Activated CD4-positive, alpha-beta T cell treated with anti-CD3 and anti-CD28 coated beads, Interleukin-2, amount 10 ng/mL, durations not matched to agents 24 days and 14 days (primary cell): ENCODE measurements at regions of chr4 and their contacts with region 1.

Region 1: GRCh38 chr4:7802093-7802726 is 137.5 kb downstream of the AFAP1 start:
- DNase-seq: peak; percentile 94
- H3K4me3 Mint-ChIP-seq: no peak overlapping the region
- H3K27ac Mint-ChIP-seq: no peak overlapping the region
- H3K4me1 Mint-ChIP-seq: peaks cover 12% of the 10 kb centered on the region
- H3K27me3 Mint-ChIP-seq: no peaks in the 10 kb centered on the region

Region 2: DNA sequence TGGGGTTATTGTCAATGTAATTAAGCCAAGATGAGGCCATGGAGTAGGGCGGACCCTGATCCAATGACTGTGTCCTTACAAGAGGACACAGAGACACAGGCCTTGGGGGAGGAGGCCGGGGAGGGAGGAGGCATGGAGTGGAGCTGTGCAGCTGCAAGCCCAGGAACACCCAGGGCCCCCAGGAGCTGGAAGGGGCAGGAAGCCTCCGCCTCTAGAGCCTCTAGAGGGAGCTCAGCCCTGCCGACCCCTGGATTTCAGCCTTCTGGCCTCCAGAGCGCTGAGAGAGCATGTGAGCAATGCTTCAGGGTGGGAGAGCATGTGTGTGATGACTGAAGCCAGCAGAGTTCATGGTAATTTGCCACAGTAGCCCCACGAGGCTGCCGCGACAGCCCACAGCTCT is 97.1 kb before region 1 on chr4:
- intact Hi-C with region 1: no loop called
- DNase-seq: no peak
- H3K4me3 Mint-ChIP-seq: no peak overlapping the region
- H3K27ac Mint-ChIP-seq: peak overlapping the region; percentile 25
- H3K4me1 Mint-ChIP-seq: no peaks in the 10 kb centered on the region
- H3K27me3 Mint-ChIP-seq: no peaks in the 10 kb centered on the region

Region 3: DNA sequence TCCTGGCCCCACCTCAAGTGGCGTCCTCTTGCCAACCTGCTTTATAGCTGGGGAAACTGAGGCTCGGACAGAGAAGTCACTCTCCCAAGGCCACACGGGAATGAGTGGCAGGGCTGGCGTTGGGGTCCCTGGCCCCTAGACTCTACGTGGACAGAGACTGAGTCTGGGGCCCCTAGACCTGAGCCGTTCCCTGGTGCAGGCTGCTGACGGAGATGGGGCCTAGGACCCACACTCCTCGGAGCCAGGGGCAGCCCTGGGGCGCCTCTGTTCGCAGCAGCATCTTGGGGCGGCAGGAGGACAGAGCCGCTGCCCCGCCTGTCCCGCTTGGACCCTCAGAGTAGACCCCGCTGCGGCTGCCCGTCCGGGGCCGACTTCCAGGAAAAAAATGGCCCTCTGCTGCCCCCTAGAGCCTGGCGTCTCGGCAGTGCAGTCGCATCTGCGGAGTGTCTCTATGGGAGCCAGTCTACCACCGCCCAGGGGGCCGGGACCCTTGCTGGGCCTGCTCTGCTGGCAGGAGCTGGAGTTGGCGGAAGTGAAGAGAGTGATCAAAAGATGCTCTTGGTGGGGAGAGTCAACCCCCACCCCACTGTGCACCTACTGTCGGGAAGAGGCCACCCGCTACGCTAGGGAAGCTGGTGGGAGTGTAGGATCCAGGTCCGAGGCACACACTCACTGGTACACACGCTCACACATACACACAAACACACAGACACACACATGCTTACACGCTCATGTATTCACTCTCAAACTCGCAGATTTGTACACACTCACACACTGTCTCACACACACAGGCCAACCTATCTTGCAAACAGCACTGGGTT is 82.6 kb before region 1 on chr4:
- intact Hi-C with region 1: loop called (anchors 1 kb)
- DNase-seq: peak; percentile 86
- H3K4me3 Mint-ChIP-seq: no peak overlapping the region
- H3K27ac Mint-ChIP-seq: no peak overlapping the region
- H3K4me1 Mint-ChIP-seq: no peaks in the 10 kb centered on the region
- H3K27me3 Mint-ChIP-seq: peaks cover 8% of the 10 kb centered on the region

Region 4: DNA sequence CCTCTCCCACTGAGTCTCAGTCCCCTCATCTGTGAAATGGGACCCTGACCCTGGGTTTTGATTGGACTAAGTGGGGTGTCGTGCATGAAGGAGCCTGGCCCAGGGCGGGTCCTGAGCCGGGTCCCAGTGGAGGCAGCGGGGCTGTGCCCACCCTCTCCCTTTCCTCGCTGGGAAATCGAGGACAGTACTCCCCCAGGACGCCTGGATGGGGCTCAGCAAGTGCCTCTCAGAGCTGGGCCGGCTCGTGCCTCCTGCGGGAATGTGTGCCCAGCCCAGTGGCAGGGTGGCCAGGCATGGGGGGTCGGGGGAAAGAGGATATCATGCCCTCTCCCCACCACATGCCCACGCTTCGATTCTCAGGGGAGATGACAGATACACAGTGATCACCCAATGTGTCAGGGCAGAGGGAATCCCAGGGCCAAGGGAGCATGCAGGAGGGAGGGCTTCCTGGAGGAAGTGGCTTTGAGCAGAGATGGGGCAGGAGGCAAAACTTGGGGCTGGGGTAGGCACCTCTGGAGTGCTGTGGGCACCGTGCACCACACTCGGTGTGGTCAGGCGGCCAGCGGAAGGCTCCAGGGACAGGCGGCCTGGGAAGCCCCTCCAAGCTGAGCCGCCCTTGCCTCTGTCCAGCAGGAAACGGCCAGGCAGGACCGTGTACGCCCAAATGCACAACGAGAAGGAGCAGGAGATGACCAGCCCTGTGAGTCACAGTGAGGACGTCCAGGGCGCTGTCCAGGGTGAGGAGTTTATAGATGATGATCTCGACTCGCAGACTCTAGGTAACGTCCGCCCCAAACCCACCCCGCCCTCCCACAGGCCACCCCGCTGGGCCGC is 65.6 kb before region 1 on chr4:
- intact Hi-C with region 1: no loop called
- DNase-seq: no peak
- H3K4me3 Mint-ChIP-seq: no peak overlapping the region
- H3K27ac Mint-ChIP-seq: no peak overlapping the region
- H3K4me1 Mint-ChIP-seq: no peaks in the 10 kb centered on the region
- H3K27me3 Mint-ChIP-seq: no peaks in the 10 kb centered on the region

Region 5: GRCh38 chr4:7770224-7771050 is 31.8 kb before region 1 on chr4:
- intact Hi-C with region 1: loop called (anchors 1 kb)
- DNase-seq: peak; percentile 77
- H3K4me3 Mint-ChIP-seq: peak overlapping the region; percentile 36
- H3K27ac Mint-ChIP-seq: peak overlapping the region; percentile 8
- H3K4me1 Mint-ChIP-seq: peaks cover 18% of the 10 kb centered on the region
- H3K27me3 Mint-ChIP-seq: no peaks in the 10 kb centered on the region

Region 6: DNA sequence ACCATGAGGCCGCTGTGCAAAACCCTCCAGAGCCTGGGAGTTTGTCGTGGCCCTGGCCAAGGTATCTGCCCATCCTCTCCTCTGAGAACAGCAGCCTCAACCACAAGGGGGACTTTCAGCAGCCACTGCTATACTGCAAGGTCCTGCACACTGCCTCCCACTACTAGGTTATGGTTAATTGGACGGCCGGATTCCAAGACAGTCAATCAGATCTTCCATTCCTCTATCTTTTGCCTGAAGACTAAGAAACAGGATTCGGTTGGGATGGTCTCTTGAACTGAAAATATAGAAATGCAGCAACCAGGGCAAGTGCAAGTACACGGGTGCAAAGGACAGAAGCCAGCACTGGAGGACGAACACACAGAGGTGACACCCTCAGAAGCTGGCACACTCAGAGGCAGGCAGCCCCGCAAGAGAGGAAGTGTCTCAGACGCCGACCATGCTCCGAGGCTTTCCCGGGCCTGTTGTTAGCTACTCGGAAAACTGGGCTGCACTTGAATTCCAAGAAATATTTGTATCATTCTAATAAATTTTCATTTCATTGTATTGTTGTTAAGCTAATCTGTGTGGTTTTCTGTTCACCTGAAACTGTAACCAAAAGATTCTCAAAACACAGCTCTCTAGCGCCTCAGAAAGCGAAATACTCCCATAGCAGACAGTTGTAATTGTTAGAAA is 74.1 kb after region 1 on chr4:
- intact Hi-C with region 1: loop called (anchors 1 kb)
- DNase-seq: peak; percentile 75
- H3K4me3 Mint-ChIP-seq: peak overlapping the region; percentile 61
- H3K27ac Mint-ChIP-seq: peak overlapping the region; percentile 56
- H3K4me1 Mint-ChIP-seq: peaks cover 44% of the 10 kb centered on the region
- H3K27me3 Mint-ChIP-seq: no peaks in the 10 kb centered on the region

Region 7: GRCh38 chr4:7987148-7987989 is 185.2 kb after region 1 on chr4:
- intact Hi-C with region 1: loop called (anchors 1 kb)
- DNase-seq: peak; percentile 93
- H3K4me3 Mint-ChIP-seq: no peak overlapping the region
- H3K27ac Mint-ChIP-seq: no peak overlapping the region
- H3K4me1 Mint-ChIP-seq: peaks cover 4% of the 10 kb centered on the region
- H3K27me3 Mint-ChIP-seq: peaks cover 1% of the 10 kb centered on the region